H1 (cell line): ENCODE measurements at regions of chr1 and their contacts with region 1.

Region 1: DNA sequence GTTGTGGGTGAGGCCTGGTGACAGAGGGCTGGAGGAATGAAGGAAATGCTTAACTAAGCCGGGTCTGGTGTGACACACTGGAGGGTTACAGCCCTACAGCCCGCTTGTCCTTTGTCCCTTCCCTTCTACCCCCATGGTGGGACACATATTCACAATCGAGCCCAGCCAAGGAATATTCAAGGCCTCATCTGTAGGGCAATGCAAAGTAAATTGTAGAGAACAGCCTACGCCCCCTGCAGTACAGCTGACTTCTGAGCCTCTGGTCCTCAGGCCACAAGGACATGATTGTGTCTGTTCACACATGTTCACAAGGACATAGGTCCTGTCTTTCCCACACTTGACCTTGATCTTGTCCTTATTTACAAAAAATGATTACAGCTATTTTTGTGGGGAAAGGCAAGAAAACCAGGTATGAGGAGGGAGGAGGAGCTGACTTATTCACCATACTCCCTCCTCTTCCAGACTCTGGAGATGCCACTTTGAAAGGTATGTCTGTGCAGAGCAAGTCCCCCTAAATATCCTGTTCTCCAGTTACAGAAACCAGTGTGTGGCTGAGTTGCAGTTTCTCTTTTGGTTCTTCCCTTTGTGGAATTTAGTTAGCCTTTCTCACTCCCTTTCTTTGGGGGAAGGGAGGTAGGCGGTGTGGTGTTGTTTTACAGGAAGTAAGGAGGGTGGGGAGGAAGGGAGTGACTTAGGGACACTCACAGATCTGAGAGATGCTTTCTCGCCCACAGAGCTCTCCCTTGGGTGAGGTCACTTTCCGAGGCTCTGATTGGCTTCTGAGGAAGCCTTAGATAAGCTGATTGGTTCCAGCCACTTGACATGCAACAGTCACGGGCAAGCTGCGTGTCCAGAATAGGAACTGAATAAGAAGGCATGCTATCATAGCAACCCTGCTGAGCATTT is 14.6 kb downstream of the POLR3GL start:
- DNase-seq: peak; percentile 67 to 90
- H3K4me3 ChIP-seq: peak overlapping the region; percentile 1 to 41 (median 13); a peak in 5 of 8 replicates
- H3K27ac ChIP-seq: peak overlapping the region; percentile 89
- H3K4me1 ChIP-seq: peaks cover 4 to 18% (median 13%) of the 10 kb centered on the region in 4 experiments; a peak in 5 of 7 replicates
- H3K27me3 ChIP-seq: no peaks in the 10 kb centered on the region
- CTCF ChIP-seq: peak; percentile 23 to 53 (median 37); a peak in 3 of 4 replicates
- EP300 ChIP-seq: peak in 1 of 2 experiments; percentile 65; a peak in 1 of 3 replicates
- POLR2A ChIP-seq: peak in 1 of 2 experiments; percentile 70; a peak in 2 of 3 replicates
- RAD21 ChIP-seq: peak in 1 of 2 experiments; percentile 10; a peak in 1 of 4 replicates

Region 2: DNA sequence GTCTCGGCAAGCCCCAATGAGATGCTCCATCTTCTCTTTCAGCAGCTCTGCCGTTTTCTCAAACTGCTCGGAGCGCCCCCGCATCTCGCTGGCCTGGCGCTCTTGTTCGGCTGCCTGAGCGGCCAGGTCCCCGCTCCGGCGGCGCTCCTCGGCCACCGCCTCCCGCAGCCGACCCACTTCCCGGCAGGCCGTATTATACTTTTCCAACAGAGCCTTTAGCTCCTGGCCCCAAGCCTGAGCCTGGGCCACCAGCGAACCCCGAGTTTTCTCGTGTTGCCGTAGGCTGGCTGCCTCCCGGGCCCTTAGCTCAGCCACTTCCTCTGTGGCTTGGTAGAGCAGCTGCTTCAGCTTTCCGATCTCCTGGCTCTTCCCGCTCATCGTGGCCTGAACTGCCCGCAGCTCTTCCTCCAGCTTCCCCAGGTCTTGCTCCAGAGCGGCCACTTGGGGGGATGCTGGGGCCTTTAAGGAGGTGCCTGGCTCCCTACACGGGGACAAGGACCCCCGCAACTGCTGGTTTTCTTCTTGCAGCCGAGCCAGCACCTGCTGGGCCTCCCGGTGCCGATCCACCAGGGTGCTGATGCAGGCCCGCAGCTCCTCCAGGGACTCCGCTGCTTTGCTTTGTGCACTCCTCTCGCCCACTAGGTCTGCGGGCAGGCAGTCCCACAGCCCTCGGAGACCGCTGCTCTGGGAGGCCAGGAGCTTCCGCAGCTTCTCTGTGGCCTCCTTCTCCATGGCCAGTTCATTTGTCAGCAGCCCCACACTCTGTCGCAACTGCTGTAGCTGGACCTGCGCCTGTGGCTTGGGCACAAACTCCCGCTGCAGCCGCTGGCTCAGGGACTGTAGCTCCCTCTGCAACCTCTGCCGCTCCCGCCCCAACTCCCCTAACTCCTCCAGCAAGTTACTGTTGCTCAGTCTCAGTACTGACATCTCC is 106.8 kb before region 1 on chr1:
- CTCF ChIA-PET with region 1: interaction called, 10 read pairs
- POLR2A ChIA-PET with region 1: no interaction called
- DNase-seq: peak in 1 of 2 experiments; percentile 82
- H3K4me3 ChIP-seq: peak overlapping the region; percentile 36 to 62 (median 52)
- H3K27ac ChIP-seq: no peak overlapping the region
- H3K4me1 ChIP-seq: peaks cover 0 to 11% (median under 1%) of the 10 kb centered on the region in 4 experiments; a peak in 4 of 7 replicates
- H3K27me3 ChIP-seq: peaks cover 0 to 24% (median 12%) of the 10 kb centered on the region in 4 experiments; a peak in 6 of 7 replicates
- CTCF ChIP-seq: no peak
- EP300 ChIP-seq: no peak
- POLR2A ChIP-seq: 0 out of 3 replicates have a peak, but pooled peaks of 1 of the 2 experiments have one; percentile 19
- RAD21 ChIP-seq: no peak

Region 3: GRCh38 chr1:145916745-145917144 is 62.4 kb before region 1 on chr1:
- CTCF ChIA-PET with region 1: no interaction called
- POLR2A ChIA-PET with region 1: no interaction called
- DNase-seq: no peak
- H3K4me3 ChIP-seq: no peak overlapping the region
- H3K27ac ChIP-seq: no peak overlapping the region
- H3K4me1 ChIP-seq: peaks cover 0 to 6% (median 2%) of the 10 kb centered on the region in 4 experiments; a peak in 6 of 7 replicates
- H3K27me3 ChIP-seq: no peaks in the 10 kb centered on the region
- CTCF ChIP-seq: no peak
- EP300 ChIP-seq: no peak
- POLR2A ChIP-seq: no peak
- RAD21 ChIP-seq: no peak

Region 4: DNA sequence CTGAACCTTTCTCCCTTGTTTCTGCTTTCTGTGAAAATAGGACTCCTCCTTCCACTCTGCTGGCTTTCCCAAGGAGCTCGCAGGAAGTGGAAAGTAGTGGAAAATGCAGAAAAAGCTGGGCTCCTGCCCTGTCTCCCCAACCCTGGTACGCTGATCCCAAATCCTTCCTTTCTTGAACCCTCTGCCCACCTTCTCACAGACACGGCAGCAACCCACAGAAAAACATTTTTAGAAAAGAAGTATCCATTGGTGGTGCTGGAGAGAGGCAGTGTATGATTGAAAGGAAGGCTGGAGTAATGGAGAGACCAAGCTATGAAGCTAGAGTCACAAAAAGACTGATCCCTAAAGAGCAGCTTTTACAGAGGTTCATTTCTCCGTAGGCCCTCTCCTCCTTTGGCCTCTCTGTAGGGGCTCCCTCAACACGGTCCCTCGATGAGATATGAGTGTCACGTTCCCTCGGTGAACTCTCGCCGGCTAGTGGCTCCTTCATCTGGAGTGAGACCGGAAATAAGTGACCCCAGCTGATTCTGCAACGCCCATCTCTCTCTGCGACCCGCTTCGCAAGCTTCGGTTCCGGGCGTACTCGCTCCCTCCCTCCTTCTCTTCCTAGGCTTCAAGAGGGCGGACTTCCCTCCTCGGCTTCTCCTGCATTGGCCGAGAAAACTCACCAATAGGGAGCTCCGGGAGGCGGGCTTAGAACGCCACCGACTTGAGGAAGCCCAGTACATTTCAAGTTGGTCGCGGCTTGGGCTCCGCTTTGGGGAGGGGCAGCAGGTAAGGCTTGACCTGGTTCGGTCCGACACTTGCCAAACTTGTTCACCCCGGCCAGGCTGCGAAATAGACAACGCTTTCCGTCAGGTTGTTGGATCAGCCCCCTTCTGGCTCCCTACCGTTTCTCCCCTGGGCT is 14.9 kb before region 1 on chr1 and contains the starts of genes ANKRD34A and POLR3GL:
- CTCF ChIA-PET with region 1: interaction called, 17 read pairs
- POLR2A ChIA-PET with region 1: interaction called, 13 read pairs
- DNase-seq: peak; percentile 87 to 94
- H3K4me3 ChIP-seq: peak within 1 kb of the TSS; percentile 54 to 81 (median 68)
- H3K27ac ChIP-seq: no peak within 1 kb of the TSS
- H3K4me1 ChIP-seq: peaks cover 0 to 17% (median 11%) of the 10 kb centered on the region in 4 experiments; a peak in 6 of 7 replicates
- H3K27me3 ChIP-seq: peaks cover 25 to 44% (median 42%) of the 10 kb centered on the region in 4 experiments
- CTCF ChIP-seq: no peak
- EP300 ChIP-seq: no peak
- POLR2A ChIP-seq: peak in 1 of 2 experiments; percentile 75; a peak in 2 of 3 replicates
- RAD21 ChIP-seq: no peak
- total RNA-seq, gene ANKRD34A: 0.20 and 0.46 TPM in 2 replicates
- total RNA-seq, gene POLR3GL: 2.3 and 3.1 TPM in 2 replicates

Region 5: DNA sequence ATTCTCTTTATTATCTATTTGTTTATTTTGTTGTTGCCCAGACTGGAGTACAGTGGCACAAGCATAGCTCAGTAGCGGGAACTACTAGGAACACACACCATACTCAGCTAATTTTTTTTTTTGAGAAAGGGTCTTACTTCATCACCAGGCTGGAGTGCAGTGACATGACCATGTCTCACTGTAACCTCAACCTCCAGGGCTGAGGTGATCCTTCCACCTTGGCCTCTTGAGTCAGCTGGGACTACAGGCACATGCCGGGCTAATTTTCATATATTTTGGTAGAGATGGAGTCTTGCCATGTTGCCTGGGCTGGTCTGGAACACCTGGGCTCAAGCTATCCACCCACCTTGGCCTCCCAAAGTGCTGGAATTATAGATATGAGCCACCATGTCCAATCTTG is 22.6 kb after region 1 on chr1:
- CTCF ChIA-PET with region 1: interaction called, 152 read pairs
- POLR2A ChIA-PET with region 1: interaction called, 218 read pairs
- DNase-seq: no peak
- H3K4me3 ChIP-seq: no peak overlapping the region
- H3K27ac ChIP-seq: no peak overlapping the region
- H3K4me1 ChIP-seq: peaks cover 0 to 8% (median 6%) of the 10 kb centered on the region in 4 experiments; a peak in 3 of 7 replicates
- H3K27me3 ChIP-seq: no peaks in the 10 kb centered on the region
- CTCF ChIP-seq: no peak
- EP300 ChIP-seq: no peak
- POLR2A ChIP-seq: no peak
- RAD21 ChIP-seq: no peak

Region 6: DNA sequence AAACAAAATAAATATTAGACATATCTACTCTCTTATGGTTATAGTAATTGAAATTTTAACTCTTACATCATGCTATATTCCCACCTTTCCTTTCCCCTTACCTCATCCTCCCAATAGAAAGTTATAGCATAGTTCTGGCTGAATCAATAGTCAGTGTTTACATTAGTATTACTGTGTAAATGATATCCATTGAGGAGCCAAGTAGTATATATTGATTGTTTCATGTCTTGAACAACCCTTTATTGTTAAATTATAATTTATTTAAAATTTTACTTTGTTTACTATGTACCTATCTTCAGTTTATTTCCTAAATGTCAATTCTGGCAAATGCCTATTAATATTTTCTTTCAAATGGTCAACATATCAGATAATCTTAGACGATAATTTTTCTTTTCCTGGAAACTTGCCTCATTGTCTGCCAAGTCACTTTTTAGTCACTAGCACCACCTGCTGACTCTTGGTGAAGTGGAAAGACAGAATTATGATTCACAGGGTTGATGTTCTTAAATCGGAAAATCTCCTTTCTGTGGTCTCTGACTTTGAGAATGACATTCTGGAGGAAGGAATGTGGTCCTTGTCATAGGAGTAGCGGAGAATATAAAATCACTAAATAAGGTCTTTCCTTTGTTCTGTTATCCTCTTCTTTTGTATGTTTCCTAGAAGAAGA is 33.8 kb after region 1 on chr1:
- CTCF ChIA-PET with region 1: interaction called, 152 read pairs
- POLR2A ChIA-PET with region 1: interaction called, 30 read pairs
- DNase-seq: no peak
- H3K4me3 ChIP-seq: no peak overlapping the region
- H3K27ac ChIP-seq: no peak overlapping the region
- H3K4me1 ChIP-seq: no peaks in the 10 kb centered on the region; a peak in 1 of 7 replicates
- H3K27me3 ChIP-seq: 0 out of 7 replicates have a peak, but pooled peaks cover 0 to under 1% (median 0%) of the 10 kb centered on the region in 4 experiments
- CTCF ChIP-seq: peak in 2 of 3 experiments; percentile 65 to 72; a peak in 3 of 4 replicates
- EP300 ChIP-seq: no peak
- POLR2A ChIP-seq: no peak
- RAD21 ChIP-seq: peak; percentile 87 to 91

Region 7: GRCh38 chr1:146036965-146037646 is 58.0 kb after region 1 on chr1:
- CTCF ChIA-PET with region 1: interaction called, 55 read pairs
- POLR2A ChIA-PET with region 1: interaction called, 3 read pairs
- DNase-seq: peak in 1 of 2 experiments; percentile 87
- H3K4me3 ChIP-seq: peak overlapping the region; percentile 73 to 93 (median 88)
- H3K27ac ChIP-seq: peak overlapping the region; percentile 40
- H3K4me1 ChIP-seq: peaks cover 0 to 3% (median 0%) of the 10 kb centered on the region in 4 experiments; a peak in 1 of 7 replicates
- H3K27me3 ChIP-seq: no peaks in the 10 kb centered on the region
- CTCF ChIP-seq: no peak
- EP300 ChIP-seq: no peak
- POLR2A ChIP-seq: no peak
- RAD21 ChIP-seq: no peak